Mucosa of descending colon (tissue), 3 donors: ENCODE measurements at regions of chr6 and their contacts with region 1.

Region 1: GRCh38 chr6:50353603-50354002 is 303.9 kb upstream of the DEFB112 start:
- DNase-seq: no peak
- ATAC-seq: no peak
- H3K4me3 ChIP-seq: no peak overlapping the region
- H3K4me1 ChIP-seq: no peaks in the 10 kb centered on the region
- CTCF ChIP-seq: no peak

Region 2: DNA sequence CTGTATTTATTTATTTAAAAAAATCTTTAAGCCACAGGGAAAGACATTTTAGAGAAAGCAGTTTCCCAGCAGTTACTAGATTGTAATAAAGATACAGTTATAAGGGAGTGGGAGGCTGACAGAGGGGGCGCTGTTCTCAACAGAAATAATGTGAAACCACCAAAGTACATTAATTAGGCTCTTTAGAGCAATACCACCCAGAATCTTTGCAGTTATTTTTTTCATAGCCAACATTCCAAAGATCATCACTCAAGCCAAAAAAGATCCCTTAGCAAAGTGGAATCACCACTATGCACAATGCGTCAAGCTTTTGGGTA is 27.5 kb after region 1 on chr6:
- intact Hi-C with region 1: loop called in 1 of 2 experiments (anchors 1 kb)
- DNase-seq: no peak
- ATAC-seq: no peak
- H3K4me3 ChIP-seq: no peak overlapping the region
- H3K4me1 ChIP-seq: no peaks in the 10 kb centered on the region
- CTCF ChIP-seq: no peak

Region 3: GRCh38 chr6:50437901-50438300 is 84.3 kb after region 1 on chr6:
- intact Hi-C with region 1: no loop called
- DNase-seq: no peak
- ATAC-seq: no peak
- H3K4me3 ChIP-seq: no peak overlapping the region
- H3K4me1 ChIP-seq: no peaks in the 10 kb centered on the region
- CTCF ChIP-seq: no peak

Region 4: DNA sequence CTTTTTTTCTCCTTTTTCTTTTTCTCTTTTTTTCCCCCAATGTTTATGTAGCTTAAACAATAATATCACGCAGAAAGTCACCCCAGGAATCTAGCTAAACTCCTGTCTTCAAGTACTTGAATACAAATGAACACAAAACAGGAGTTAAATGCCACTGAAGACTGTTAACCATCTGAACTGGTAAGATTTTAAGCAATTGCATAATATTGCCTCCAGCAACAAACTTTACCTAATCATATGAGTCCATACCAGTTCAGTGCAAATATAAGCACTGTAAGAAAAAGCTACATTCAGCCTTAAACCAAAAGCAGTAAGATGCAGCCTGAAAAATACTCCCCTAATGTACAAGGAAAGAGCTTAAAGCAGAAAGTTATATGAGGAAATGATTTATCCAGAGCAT is 185.8 kb after region 1 on chr6:
- intact Hi-C with region 1: no loop called
- DNase-seq: no peak
- ATAC-seq: no peak
- H3K4me3 ChIP-seq: no peak overlapping the region
- H3K4me1 ChIP-seq: no peaks in the 10 kb centered on the region
- CTCF ChIP-seq: no peak